ENCODE measurements at regions of chr19 and their contacts with region 1.

Region 1: GRCh38 chr19:14059093-14059480 is 2.8 kb downstream of the PALM3 start:
- DNase-seq: peak in 1 of 2 experiments; percentile 93
- H3K4me3 ChIP-seq: no peak overlapping the region
- H3K27ac ChIP-seq: no peak overlapping the region
- H3K4me1 ChIP-seq: peaks cover 0 to 10% (median 3%) of the 10 kb centered on the region in 4 experiments; a peak in 4 of 7 replicates
- H3K27me3 ChIP-seq: peaks cover 5 to 19% (median 14%) of the 10 kb centered on the region in 4 experiments
- CTCF ChIP-seq: peak; percentile 74 to 96 (median 83)
- EP300 ChIP-seq: no peak
- POLR2A ChIP-seq: no peak
- RAD21 ChIP-seq: peak; percentile 50 to 52; a peak in 3 of 4 replicates

Region 2: GRCh38 chr19:13905938-13906904 is 152.9 kb before region 1 on chr19 and contains the starts of genes BRME1 and CC2D1A:
- CTCF ChIA-PET with region 1: interaction called, 11 read pairs
- POLR2A ChIA-PET with region 1: no interaction called
- DNase-seq: peak; percentile 67 to 95
- H3K4me3 ChIP-seq: peak within 1 kb of the TSS; percentile 81 to 85 (median 82)
- H3K27ac ChIP-seq: 0 out of 2 replicates have a peak within 1 kb of the TSS, but pooled peaks have one; percentile 12
- H3K4me1 ChIP-seq: peaks cover 0 to 6% (median under 1%) of the 10 kb centered on the region in 4 experiments; a peak in 2 of 7 replicates
- H3K27me3 ChIP-seq: peaks cover 0 to 4% (median 3%) of the 10 kb centered on the region in 4 experiments; a peak in 3 of 7 replicates
- CTCF ChIP-seq: no peak
- EP300 ChIP-seq: no peak
- POLR2A ChIP-seq: peak in 1 of 2 experiments; percentile 49; a peak in 1 of 3 replicates
- RAD21 ChIP-seq: peak in 1 of 2 experiments; percentile 1; a peak in 1 of 4 replicates
- total RNA-seq, gene BRME1: 4.6 and 4.7 TPM in 2 replicates
- total RNA-seq, gene CC2D1A: 33.0 and 36.4 TPM in 2 replicates

Region 3: GRCh38 chr19:13995017-13995728 is 63.9 kb before region 1 on chr19:
- CTCF ChIA-PET with region 1: no interaction called
- POLR2A ChIA-PET with region 1: no interaction called
- DNase-seq: no peak
- H3K4me3 ChIP-seq: no peak overlapping the region
- H3K27ac ChIP-seq: no peak overlapping the region; the same call in 1 of the 2 replicates
- H3K4me1 ChIP-seq: no peaks in the 10 kb centered on the region; a peak in 2 of 7 replicates
- H3K27me3 ChIP-seq: no peaks in the 10 kb centered on the region
- CTCF ChIP-seq: no peak
- EP300 ChIP-seq: no peak
- POLR2A ChIP-seq: no peak
- RAD21 ChIP-seq: no peak; a peak in 1 of 4 replicates

Region 4: GRCh38 chr19:14031719-14032480 is 27.2 kb before region 1 on chr19 and contains the start of gene IL27RA:
- CTCF ChIA-PET with region 1: interaction called, 11 read pairs
- POLR2A ChIA-PET with region 1: interaction called, 4 read pairs
- DNase-seq: peak; percentile 31 to 84
- H3K4me3 ChIP-seq: peak within 1 kb of the TSS; percentile 58 to 78 (median 68)
- H3K27ac ChIP-seq: no peak within 1 kb of the TSS
- H3K4me1 ChIP-seq: peaks cover 0 to 9% (median 3%) of the 10 kb centered on the region in 4 experiments; a peak in 6 of 7 replicates
- H3K27me3 ChIP-seq: peaks cover 0 to 12% (median 9%) of the 10 kb centered on the region in 4 experiments; a peak in 5 of 7 replicates
- CTCF ChIP-seq: peak; percentile 76 to 82 (median 78)
- EP300 ChIP-seq: no peak
- POLR2A ChIP-seq: no peak
- RAD21 ChIP-seq: peak; percentile 58 to 68
- total RNA-seq, gene IL27RA: 14.7 and 15.1 TPM in 2 replicates

Region 5: DNA sequence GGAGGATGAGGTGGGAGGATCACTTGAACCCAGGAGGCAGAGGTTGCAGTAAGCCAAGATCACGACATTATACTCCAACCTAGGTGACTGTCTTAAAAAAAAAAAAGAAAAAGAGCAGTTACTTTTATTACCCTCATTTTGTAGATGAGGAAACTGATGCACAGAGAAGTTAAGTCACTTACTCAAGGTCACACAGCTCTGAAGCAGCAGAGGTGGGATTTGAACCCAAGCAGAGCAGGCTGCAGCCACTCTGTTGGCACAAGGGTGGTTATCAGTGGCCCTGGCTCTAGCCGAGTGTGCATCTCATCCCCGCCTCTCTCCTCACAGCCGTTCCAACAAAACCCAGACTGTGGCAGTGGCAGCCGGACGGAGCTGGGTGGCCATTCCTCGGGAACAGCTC is 19.9 kb before region 1 on chr19:
- CTCF ChIA-PET with region 1: interaction called, 77 read pairs
- POLR2A ChIA-PET with region 1: interaction called, 4 read pairs
- DNase-seq: no peak
- H3K4me3 ChIP-seq: no peak overlapping the region
- H3K27ac ChIP-seq: no peak overlapping the region
- H3K4me1 ChIP-seq: no peaks in the 10 kb centered on the region
- H3K27me3 ChIP-seq: no peaks in the 10 kb centered on the region
- CTCF ChIP-seq: no peak
- EP300 ChIP-seq: no peak
- POLR2A ChIP-seq: no peak
- RAD21 ChIP-seq: no peak

Region 6: GRCh38 chr19:14048443-14049153 is 10.5 kb before region 1 on chr19:
- CTCF ChIA-PET with region 1: interaction called, 77 read pairs
- POLR2A ChIA-PET with region 1: interaction called, 5 read pairs
- DNase-seq: peak; percentile 56 to 97
- H3K4me3 ChIP-seq: no peak overlapping the region
- H3K27ac ChIP-seq: no peak overlapping the region
- H3K4me1 ChIP-seq: no peaks in the 10 kb centered on the region; a peak in 1 of 7 replicates
- H3K27me3 ChIP-seq: no peaks in the 10 kb centered on the region
- CTCF ChIP-seq: peak; percentile 95 to 97 (median 96)
- EP300 ChIP-seq: no peak
- POLR2A ChIP-seq: no peak
- RAD21 ChIP-seq: peak; percentile 66 to 75

Region 7: DNA sequence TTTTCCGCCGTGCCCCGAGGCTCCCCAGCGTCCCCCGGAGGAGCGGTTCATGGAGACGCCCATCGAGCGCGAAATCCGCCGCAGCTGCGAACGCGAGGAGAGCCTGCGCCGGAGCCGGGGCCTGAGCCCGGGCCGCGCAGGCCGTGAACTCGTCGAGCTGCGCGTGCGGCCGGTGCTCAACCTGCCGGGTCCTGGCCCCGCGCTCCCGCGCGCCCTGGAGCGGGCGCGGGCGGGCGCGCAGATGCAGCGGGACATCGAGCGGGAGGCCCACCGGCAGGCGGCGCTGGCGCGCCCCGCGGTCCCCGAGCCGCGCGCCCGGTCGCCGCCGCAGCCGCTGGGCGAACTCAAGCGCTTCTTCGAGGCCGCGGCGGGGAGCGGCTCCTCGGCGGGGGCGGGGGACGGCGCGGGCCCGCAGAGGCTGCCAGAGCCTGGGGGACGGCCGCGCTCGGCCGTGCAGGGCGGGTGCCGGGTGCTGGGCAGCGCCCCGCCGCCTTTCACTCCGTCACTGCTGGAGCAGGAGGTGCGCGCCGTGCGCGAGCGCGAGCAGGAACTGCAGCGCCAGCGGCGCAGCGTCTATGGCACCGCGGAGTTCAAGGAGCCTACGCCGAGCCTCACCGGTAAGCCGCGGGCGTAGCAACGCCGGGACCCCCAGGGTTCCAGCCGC is 14.3 kb after region 1 on chr19:
- CTCF ChIA-PET with region 1: interaction called, 103 read pairs
- POLR2A ChIA-PET with region 1: interaction called, 3 read pairs
- DNase-seq: peak in 1 of 2 experiments; percentile 86
- H3K4me3 ChIP-seq: peak overlapping the region; percentile 46 to 66 (median 50)
- H3K27ac ChIP-seq: no peak overlapping the region
- H3K4me1 ChIP-seq: peaks cover 0 to 15% (median 9%) of the 10 kb centered on the region in 4 experiments; a peak in 5 of 7 replicates
- H3K27me3 ChIP-seq: peaks cover 17 to 40% (median 32%) of the 10 kb centered on the region in 4 experiments
- CTCF ChIP-seq: peak; percentile 62 to 89 (median 83)
- EP300 ChIP-seq: no peak
- POLR2A ChIP-seq: no peak
- RAD21 ChIP-seq: peak in 1 of 2 experiments; percentile 19; a peak in 2 of 4 replicates

Region 8: GRCh38 chr19:14081325-14082093 is 22.4 kb after region 1 on chr19:
- CTCF ChIA-PET with region 1: interaction called, 75 read pairs
- POLR2A ChIA-PET with region 1: interaction called, 3 read pairs
- DNase-seq: peak; percentile 97 to 100
- H3K4me3 ChIP-seq: peak overlapping the region; percentile 63 to 77 (median 70)
- H3K27ac ChIP-seq: no peak overlapping the region
- H3K4me1 ChIP-seq: peaks cover 0 to 3% (median 0%) of the 10 kb centered on the region in 4 experiments; a peak in 1 of 7 replicates
- H3K27me3 ChIP-seq: peaks cover 0 to 4% (median 0%) of the 10 kb centered on the region in 4 experiments; a peak in 3 of 7 replicates
- CTCF ChIP-seq: no peak
- EP300 ChIP-seq: no peak
- POLR2A ChIP-seq: no peak
- RAD21 ChIP-seq: no peak

Region 9: GRCh38 chr19:14146789-14147216 is 87.7 kb after region 1 on chr19:
- CTCF ChIA-PET with region 1: no interaction called
- POLR2A ChIA-PET with region 1: no interaction called
- DNase-seq: no peak
- H3K4me3 ChIP-seq: no peak overlapping the region
- H3K27ac ChIP-seq: no peak overlapping the region
- H3K4me1 ChIP-seq: peaks cover 0 to 21% (median 15%) of the 10 kb centered on the region in 4 experiments; a peak in 6 of 7 replicates
- H3K27me3 ChIP-seq: no peaks in the 10 kb centered on the region; a peak in 1 of 7 replicates
- CTCF ChIP-seq: no peak
- EP300 ChIP-seq: no peak
- POLR2A ChIP-seq: no peak
- RAD21 ChIP-seq: no peak

Measured in H1 (cell line).